ENCODE measurements at regions of chr14 and their contacts with region 1.

Region 1: GRCh38 chr14:25574628-25575325 is 524.8 kb upstream of the STXBP6 start:
- DNase-seq: no peak
- H3K4me3 ChIP-seq: no peak overlapping the region
- H3K27ac ChIP-seq: no peak overlapping the region
- H3K4me1 ChIP-seq: no peaks in the 10 kb centered on the region
- H3K27me3 ChIP-seq: no peaks in the 10 kb centered on the region
- CTCF ChIP-seq: no peak

Region 2: DNA sequence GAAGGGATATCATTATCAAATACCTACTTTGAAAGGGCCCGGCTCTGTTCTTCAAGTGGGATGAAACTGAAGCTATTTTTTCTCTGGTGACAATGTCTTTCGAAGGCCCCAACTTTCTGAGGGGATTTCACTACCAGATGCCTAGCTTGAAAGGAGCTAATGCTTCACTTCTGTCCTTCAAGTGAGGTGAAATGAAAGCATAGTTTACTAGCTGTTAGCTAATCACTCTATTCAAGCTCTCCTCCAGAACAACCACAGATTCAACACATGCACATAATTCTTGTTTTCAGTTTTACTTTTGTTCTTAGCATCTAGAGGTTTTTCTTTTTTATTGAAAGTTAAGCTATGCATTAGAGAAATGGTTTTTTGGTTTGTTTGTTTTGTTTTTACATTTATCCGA is 451.6 kb after region 1 on chr14:
- intact Hi-C with region 1: loop called (anchors 5 kb)
- DNase-seq: no peak
- H3K4me3 ChIP-seq: no peak overlapping the region
- H3K27ac ChIP-seq: no peak overlapping the region
- H3K4me1 ChIP-seq: no peaks in the 10 kb centered on the region
- H3K27me3 ChIP-seq: no peaks in the 10 kb centered on the region
- CTCF ChIP-seq: no peak